Activated naive CD4-positive, alpha-beta T cell treated with anti-CD3 and anti-CD28 coated beads for 36 hours (primary cell): ENCODE measurements at regions of chrX and their contacts with region 1.

Region 1: GRCh38 chrX:140733769-140734342 is 24.3 kb downstream of the LINC00632 start:
- DNase-seq: peak; percentile 6
- H3K4me3 Mint-ChIP-seq: no peak overlapping the region
- H3K27ac Mint-ChIP-seq: no peak overlapping the region
- H3K4me1 Mint-ChIP-seq: no peaks in the 10 kb centered on the region
- H3K27me3 Mint-ChIP-seq: no peaks in the 10 kb centered on the region

Region 2: DNA sequence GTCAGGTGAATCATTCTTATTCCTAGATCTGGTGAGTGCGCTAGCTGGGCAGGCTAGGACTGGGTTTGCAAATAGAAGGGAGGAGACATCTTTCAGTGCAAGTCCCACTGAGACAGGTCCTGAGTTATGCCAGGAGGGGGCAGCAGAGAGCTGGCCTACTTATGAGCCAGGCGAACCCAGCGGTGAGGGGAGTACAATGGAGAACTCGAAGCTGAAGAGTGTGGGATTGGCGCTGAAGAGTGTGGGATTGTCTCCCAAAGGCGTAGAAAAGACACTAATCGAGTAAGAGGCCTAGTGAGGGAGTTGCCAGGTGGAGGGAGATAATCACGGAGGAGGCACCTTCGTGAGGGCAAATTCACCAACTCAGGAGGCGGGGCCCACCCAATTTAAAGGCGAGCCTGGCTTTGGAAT is 676.9 kb before region 1 on chrX:
- CTCF ChIA-PET with region 1: no interaction called
- intact Hi-C with region 1: loop called (anchors 1 kb)
- DNase-seq: peak; percentile 69
- H3K4me3 Mint-ChIP-seq: no peak overlapping the region
- H3K27ac Mint-ChIP-seq: no peak overlapping the region
- H3K4me1 Mint-ChIP-seq: peaks cover 2% of the 10 kb centered on the region
- H3K27me3 Mint-ChIP-seq: no peaks in the 10 kb centered on the region

Region 3: GRCh38 chrX:140572724-140573123 is 161.1 kb before region 1 on chrX:
- CTCF ChIA-PET with region 1: no interaction called
- intact Hi-C with region 1: loop called (anchors 1 kb)
- DNase-seq: peak; percentile 27
- H3K4me3 Mint-ChIP-seq: no peak overlapping the region
- H3K27ac Mint-ChIP-seq: no peak overlapping the region
- H3K4me1 Mint-ChIP-seq: no peaks in the 10 kb centered on the region
- H3K27me3 Mint-ChIP-seq: no peaks in the 10 kb centered on the region

Region 4: GRCh38 chrX:140701480-140701879 is 32.4 kb before region 1 on chrX:
- CTCF ChIA-PET with region 1: interaction called, 3 read pairs
- intact Hi-C with region 1: loop called (anchors 1 kb)
- DNase-seq: no peak
- H3K4me3 Mint-ChIP-seq: no peak overlapping the region
- H3K27ac Mint-ChIP-seq: no peak overlapping the region
- H3K4me1 Mint-ChIP-seq: no peaks in the 10 kb centered on the region
- H3K27me3 Mint-ChIP-seq: no peaks in the 10 kb centered on the region